ENCODE measurements at regions of chr3 and their contacts with region 1.

Region 1: DNA sequence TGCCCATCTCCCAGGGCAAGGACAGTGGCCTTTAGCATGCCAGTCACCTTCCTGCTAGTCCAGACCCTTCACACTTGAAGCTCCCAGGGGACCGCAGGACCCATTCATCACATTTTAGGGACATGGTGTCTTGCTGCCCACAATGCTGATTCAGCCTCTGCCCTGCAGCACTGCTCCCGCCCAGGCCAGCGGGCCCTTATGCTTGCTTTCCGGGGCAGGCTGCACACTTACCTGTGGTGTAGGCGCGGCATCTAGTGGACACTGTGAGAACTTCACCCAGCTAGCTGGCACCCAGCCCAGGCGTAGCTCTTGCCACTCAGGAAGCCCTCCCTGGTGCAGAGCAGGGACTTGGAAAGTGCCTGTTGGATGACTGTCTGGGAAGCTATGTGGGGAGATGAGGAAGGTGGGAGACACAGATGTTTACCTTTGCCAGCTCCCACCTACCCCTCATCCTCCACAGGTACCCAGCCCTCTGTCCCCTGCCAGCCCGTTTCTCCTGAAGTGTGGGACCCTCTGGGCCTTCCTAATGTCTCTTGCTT is 26.2 kb upstream of the NR2C2 start:
- DNase-seq: peak; percentile 73 to 79 (median 77)
- H3K4me3 ChIP-seq: no peak overlapping the region
- H3K4me3 Mint-ChIP-seq: no peak overlapping the region
- H3K27ac ChIP-seq: no peak overlapping the region
- H3K27ac Mint-ChIP-seq: no peak overlapping the region
- H3K4me1 ChIP-seq: peaks cover 5% of the 10 kb centered on the region
- H3K4me1 Mint-ChIP-seq: peaks cover 0 to 4% (median 0%) of the 10 kb centered on the region in 4 donors
- H3K27me3 ChIP-seq: no peaks in the 10 kb centered on the region
- H3K27me3 Mint-ChIP-seq: peaks cover 0 to 2% of the 10 kb centered on the region in 2 donors

Region 2: GRCh38 chr3:14508961-14509795 is 412.0 kb before region 1 on chr3:
- CTCF ChIA-PET with region 1: interaction called, 9 read pairs
- POLR2A ChIA-PET with region 1: no interaction called
- intact Hi-C with region 1: loop called (anchors 1 kb)
- DNase-seq: peak; percentile 35 to 51 (median 43)
- H3K4me3 ChIP-seq: no peak overlapping the region
- H3K4me3 Mint-ChIP-seq: no peak overlapping the region
- H3K27ac ChIP-seq: no peak overlapping the region
- H3K27ac Mint-ChIP-seq: peak overlapping the region in 1 of 7 donors; percentile 41
- H3K4me1 ChIP-seq: no peaks in the 10 kb centered on the region
- H3K4me1 Mint-ChIP-seq: peaks cover 0 to 2% (median under 1%) of the 10 kb centered on the region in 4 donors
- H3K27me3 ChIP-seq: no peaks in the 10 kb centered on the region
- H3K27me3 Mint-ChIP-seq: peaks cover 1 to 6% of the 10 kb centered on the region in 2 donors

Region 3: GRCh38 chr3:14672588-14672987 is 248.6 kb before region 1 on chr3:
- CTCF ChIA-PET with region 1: interaction called, 24 read pairs
- POLR2A ChIA-PET with region 1: no interaction called
- intact Hi-C with region 1: loop called (anchors 1 kb)
- DNase-seq: no peak
- H3K4me3 ChIP-seq: no peak overlapping the region
- H3K4me3 Mint-ChIP-seq: no peak overlapping the region
- H3K27ac ChIP-seq: no peak overlapping the region
- H3K27ac Mint-ChIP-seq: peak overlapping the region in 3 of 7 donors; percentile 8 to 60 (median 8)
- H3K4me1 ChIP-seq: no peaks in the 10 kb centered on the region
- H3K4me1 Mint-ChIP-seq: peaks cover 0 to 3% (median 0%) of the 10 kb centered on the region in 4 donors
- H3K27me3 ChIP-seq: no peaks in the 10 kb centered on the region
- H3K27me3 Mint-ChIP-seq: no peaks in the 10 kb centered on the region

Region 4: DNA sequence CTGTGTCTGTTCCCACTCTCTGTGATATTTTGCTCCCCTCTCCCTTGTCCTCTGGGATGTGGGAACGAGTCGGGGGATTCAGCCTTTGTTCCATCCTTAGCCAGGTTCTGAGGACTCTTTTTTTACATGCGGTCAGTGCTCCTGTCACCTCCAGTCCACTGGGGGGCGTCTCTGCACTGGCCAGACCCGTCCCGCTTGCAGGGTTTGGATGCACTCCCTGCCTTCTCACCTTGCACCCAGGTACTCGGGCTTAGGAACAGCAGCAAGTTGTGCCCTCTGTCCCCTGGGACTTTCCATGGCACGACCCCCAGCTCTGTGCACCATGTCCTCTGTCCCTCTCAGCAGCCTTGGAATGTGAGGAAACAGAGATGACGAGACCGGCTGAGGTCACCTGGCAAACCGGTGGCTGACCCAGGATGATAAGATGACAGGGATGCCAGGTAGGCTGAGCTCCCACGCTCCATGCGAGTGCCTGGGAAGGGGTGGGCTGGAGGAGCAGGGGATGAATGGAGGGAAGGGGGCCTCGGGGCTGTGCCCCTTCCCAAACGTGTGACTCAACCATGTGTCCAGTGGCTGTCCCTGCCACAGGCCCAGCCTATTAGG is 129.7 kb before region 1 on chr3:
- CTCF ChIA-PET with region 1: interaction called, 12 read pairs
- POLR2A ChIA-PET with region 1: no interaction called
- intact Hi-C with region 1: loop called (anchors 1 kb)
- DNase-seq: peak in 4 of 5 donors; percentile 28 to 43 (median 37)
- H3K4me3 ChIP-seq: no peak overlapping the region
- H3K4me3 Mint-ChIP-seq: no peak overlapping the region
- H3K27ac ChIP-seq: no peak overlapping the region
- H3K27ac Mint-ChIP-seq: no peak overlapping the region
- H3K4me1 ChIP-seq: no peaks in the 10 kb centered on the region
- H3K4me1 Mint-ChIP-seq: peaks cover 0 to 4% (median 0%) of the 10 kb centered on the region in 4 donors
- H3K27me3 ChIP-seq: no peaks in the 10 kb centered on the region
- H3K27me3 Mint-ChIP-seq: peaks cover 13 to 25% of the 10 kb centered on the region in 2 donors

Region 5: GRCh38 chr3:15108082-15108545 is 187.0 kb after region 1 on chr3:
- CTCF ChIA-PET with region 1: interaction called, 4 read pairs
- POLR2A ChIA-PET with region 1: no interaction called
- intact Hi-C with region 1: loop called (anchors 2 kb)
- DNase-seq: peak; percentile 68 to 71 (median 69)
- H3K4me3 ChIP-seq: no peak overlapping the region
- H3K4me3 Mint-ChIP-seq: peak overlapping the region in 1 of 8 donors; percentile 54
- H3K27ac ChIP-seq: no peak overlapping the region
- H3K27ac Mint-ChIP-seq: peak overlapping the region in 3 of 7 donors; percentile 35 to 86 (median 64)
- H3K4me1 ChIP-seq: peaks cover 4% of the 10 kb centered on the region
- H3K4me1 Mint-ChIP-seq: peaks cover 0 to 8% (median 3%) of the 10 kb centered on the region in 4 donors
- H3K27me3 ChIP-seq: no peaks in the 10 kb centered on the region
- H3K27me3 Mint-ChIP-seq: peaks cover 0 to 7% of the 10 kb centered on the region in 2 donors

Measured in CD4-positive, alpha-beta memory T cell (primary cell).